A673 (cell line): ENCODE measurements at regions of chr4 and their contacts with region 1.

Region 1: DNA sequence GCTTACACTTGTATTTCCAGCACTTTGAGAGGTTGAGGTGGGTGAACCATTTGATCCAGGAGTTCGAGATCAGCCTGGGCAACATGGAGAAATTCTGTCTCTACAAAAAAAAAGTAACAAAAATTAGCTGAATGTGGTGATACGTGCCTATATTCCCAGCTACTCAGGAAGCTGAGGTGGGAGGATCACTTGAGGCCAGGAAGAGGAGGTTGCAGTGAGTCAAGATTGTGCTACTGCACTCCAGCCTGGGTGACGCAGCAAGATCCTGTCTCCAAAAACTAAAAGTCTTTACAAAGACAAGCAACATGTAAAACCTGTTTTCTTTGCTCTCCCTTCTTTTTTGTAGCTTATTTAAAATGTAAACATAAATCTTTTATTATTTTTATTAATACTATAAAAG is 1156.1 kb downstream of the FAT4 start:
- DNase-seq: peak; percentile 69
- H3K4me3 ChIP-seq: no peak overlapping the region
- H3K27ac ChIP-seq: peak overlapping the region; percentile 99
- H3K4me1 ChIP-seq: peaks cover 32% of the 10 kb centered on the region
- H3K27me3 ChIP-seq: no peaks in the 10 kb centered on the region
- CTCF ChIP-seq: no peak

Region 2: GRCh38 chr4:125184116-125184515 is 1286.7 kb before region 1 on chr4:
- CTCF ChIA-PET with region 1: no interaction called
- POLR2A ChIA-PET with region 1: no interaction called
- intact Hi-C with region 1: no loop called
- DNase-seq: no peak
- H3K4me3 ChIP-seq: no peak overlapping the region
- H3K27ac ChIP-seq: no peak overlapping the region
- H3K4me1 ChIP-seq: no peaks in the 10 kb centered on the region
- H3K27me3 ChIP-seq: no peaks in the 10 kb centered on the region
- CTCF ChIP-seq: no peak

Region 3: GRCh38 chr4:125826801-125827695 is 643.8 kb before region 1 on chr4:
- CTCF ChIA-PET with region 1: no interaction called
- POLR2A ChIA-PET with region 1: no interaction called
- intact Hi-C with region 1: loop called (anchors 1 kb)
- DNase-seq: peak; percentile 63
- H3K4me3 ChIP-seq: no peak overlapping the region
- H3K27ac ChIP-seq: peak overlapping the region; percentile 85
- H3K4me1 ChIP-seq: peaks cover 25% of the 10 kb centered on the region
- H3K27me3 ChIP-seq: no peaks in the 10 kb centered on the region
- CTCF ChIP-seq: no peak

Region 4: GRCh38 chr4:126604268-126604867 is 133.5 kb after region 1 on chr4:
- CTCF ChIA-PET with region 1: no interaction called
- POLR2A ChIA-PET with region 1: no interaction called
- intact Hi-C with region 1: loop called (anchors 1 kb)
- DNase-seq: peak; percentile 88
- H3K4me3 ChIP-seq: no peak overlapping the region
- H3K27ac ChIP-seq: peak overlapping the region; percentile 78
- H3K4me1 ChIP-seq: peaks cover 43% of the 10 kb centered on the region
- H3K27me3 ChIP-seq: no peaks in the 10 kb centered on the region
- CTCF ChIP-seq: peak; percentile 85

Region 5: GRCh38 chr4:126957556-126957955 is 486.7 kb after region 1 on chr4:
- CTCF ChIA-PET with region 1: interaction called, 4 read pairs
- POLR2A ChIA-PET with region 1: no interaction called
- intact Hi-C with region 1: loop called (anchors 2 kb)
- DNase-seq: peak; percentile 34
- H3K4me3 ChIP-seq: no peak overlapping the region
- H3K27ac ChIP-seq: peak overlapping the region; percentile 1
- H3K4me1 ChIP-seq: peaks cover 24% of the 10 kb centered on the region
- H3K27me3 ChIP-seq: no peaks in the 10 kb centered on the region
- CTCF ChIP-seq: peak; percentile 43; the same call in 1 of the 2 replicates